Cardiac septum (tissue), 1 donor: ENCODE measurements at regions of chr9 and their contacts with region 1.

Region 1: GRCh38 chr9:121545875-121546423 is 46.3 kb upstream of the GGTA1 start:
- DNase-seq: peak; percentile 97

Region 2: GRCh38 chr9:121634329-121635261 is 88.6 kb after region 1 on chr9:
- intact Hi-C with region 1: loop called (anchors 5 kb)
- DNase-seq: no peak

Region 3: GRCh38 chr9:121698627-121699570 is 152.9 kb after region 1 on chr9:
- intact Hi-C with region 1: loop called (anchors 5 kb)
- DNase-seq: peak; percentile 83

Region 4: GRCh38 chr9:121744002-121744686 is 198.2 kb after region 1 on chr9:
- intact Hi-C with region 1: no loop called
- DNase-seq: no peak

Region 5: GRCh38 chr9:121861501-121862180 is 315.7 kb after region 1 on chr9:
- intact Hi-C with region 1: loop called (anchors 10 kb)
- DNase-seq: peak; percentile 74

Region 6: GRCh38 chr9:121992571-121993212 is 446.7 kb after region 1 on chr9:
- intact Hi-C with region 1: loop called (anchors 2 kb)
- DNase-seq: no peak

Region 7: DNA sequence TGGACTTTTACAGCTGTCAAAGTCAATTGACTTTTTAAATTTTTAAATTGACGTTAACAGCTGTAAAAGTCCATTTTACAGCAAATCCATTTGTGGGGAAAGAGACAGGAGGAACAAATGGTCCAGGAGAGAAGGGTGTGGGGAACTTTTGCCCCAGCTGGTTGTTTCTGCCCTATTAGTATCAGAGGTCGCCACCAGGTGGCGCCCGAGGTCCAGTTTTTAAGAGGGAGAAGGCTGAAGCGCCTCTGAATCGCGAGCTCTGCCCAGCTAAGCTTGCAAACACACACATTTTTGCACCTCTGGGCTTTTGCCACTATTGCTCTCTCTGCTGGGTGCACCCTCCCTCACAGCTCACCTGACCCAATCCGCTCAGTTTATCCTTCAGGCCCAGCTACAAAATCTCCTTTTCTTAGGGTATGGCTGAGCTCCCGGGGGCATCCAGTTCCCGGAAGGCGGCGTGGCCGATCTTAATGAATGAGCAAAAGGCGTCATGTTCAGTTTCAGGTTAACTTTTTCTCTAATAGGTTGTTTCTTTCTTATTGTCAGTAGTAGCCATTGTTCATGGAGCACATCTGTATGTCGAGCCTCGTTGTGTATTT is 553.4 kb after region 1 on chr9:
- intact Hi-C with region 1: loop called (anchors 5 kb)
- DNase-seq: peak; percentile 91